Activated CD4-positive, alpha-beta T cell treated with anti-CD3 and anti-CD28 coated beads for 36 hours (primary cell): ENCODE measurements at regions of chr17 and their contacts with region 1.

Region 1: GRCh38 chr17:39687811-39688518 is at the start of gene PGAP3:
- DNase-seq: peak; percentile 92
- ATAC-seq: peak; percentile 96
- H3K4me3 Mint-ChIP-seq: peak within 1 kb of the TSS; percentile 86
- H3K27ac Mint-ChIP-seq: peak within 1 kb of the TSS; percentile 95
- H3K4me1 Mint-ChIP-seq: peaks cover 19% of the 10 kb centered on the region
- H3K27me3 Mint-ChIP-seq: no peaks in the 10 kb centered on the region
- total RNA-seq, gene PGAP3: 8.6 to 11.9 TPM

Region 2: GRCh38 chr17:39450847-39451581 is 237.0 kb before region 1 on chr17 and contains the start of gene MED1:
- CTCF ChIA-PET with region 1: interaction called, 4 read pairs
- POLR2A ChIA-PET with region 1: no interaction called
- intact Hi-C with region 1: loop called in 1 of 2 experiments (anchors 1 kb)
- DNase-seq: peak; percentile 96
- ATAC-seq: peak; percentile 99
- H3K4me3 Mint-ChIP-seq: peak within 1 kb of the TSS; percentile 96
- H3K27ac Mint-ChIP-seq: peak within 1 kb of the TSS; percentile 96
- H3K4me1 Mint-ChIP-seq: peaks cover 30% of the 10 kb centered on the region
- H3K27me3 Mint-ChIP-seq: no peaks in the 10 kb centered on the region
- total RNA-seq, gene MED1: 66.1 to 76.1 TPM

Region 3: GRCh38 chr17:39730095-39730921 is 42.3 kb after region 1 on chr17 and contains the start of gene MIEN1:
- CTCF ChIA-PET with region 1: interaction called, 5 read pairs
- POLR2A ChIA-PET with region 1: no interaction called
- intact Hi-C with region 1: loop called (anchors 1 to 5 kb)
- DNase-seq: peak; percentile 97
- ATAC-seq: peak; percentile 92
- H3K4me3 Mint-ChIP-seq: peak within 1 kb of the TSS; percentile 90
- H3K27ac Mint-ChIP-seq: peak within 1 kb of the TSS; percentile 88
- H3K4me1 Mint-ChIP-seq: peaks cover 15% of the 10 kb centered on the region
- H3K27me3 Mint-ChIP-seq: no peaks in the 10 kb centered on the region
- total RNA-seq, gene MIEN1: 32.5 to 39.4 TPM

Region 4: GRCh38 chr17:39813631-39814030 is 125.7 kb after region 1 on chr17:
- CTCF ChIA-PET with region 1: no interaction called
- POLR2A ChIA-PET with region 1: no interaction called
- intact Hi-C with region 1: no loop called
- DNase-seq: peak; percentile 66
- ATAC-seq: peak; percentile 90
- H3K4me3 Mint-ChIP-seq: peak overlapping the region; percentile 70
- H3K27ac Mint-ChIP-seq: peak overlapping the region; percentile 85
- H3K4me1 Mint-ChIP-seq: peaks cover 59% of the 10 kb centered on the region
- H3K27me3 Mint-ChIP-seq: no peaks in the 10 kb centered on the region